Naive thymus-derived CD4-positive, alpha-beta T cell (primary cell): ENCODE measurements at regions of chr19 and their contacts with region 1.

Region 1: GRCh38 chr19:40806488-40807468 is 7.8 kb downstream of the EGLN2 start:
- DNase-seq: peak; percentile 65 to 88 (median 81)
- ATAC-seq: peak; percentile 71
- H3K4me3 ChIP-seq: peak overlapping the region; percentile 53
- H3K4me3 Mint-ChIP-seq: peak overlapping the region; percentile 81 to 100 (median 90)
- H3K27ac ChIP-seq: peak overlapping the region; percentile 87
- H3K27ac Mint-ChIP-seq: peak overlapping the region; percentile 95 to 99 (median 98)
- H3K4me1 ChIP-seq: peaks cover 66 to 80% of the 10 kb centered on the region in 2 donors
- H3K4me1 Mint-ChIP-seq: peaks cover 67 to 98% (median 85%) of the 10 kb centered on the region in 7 donors
- H3K27me3 ChIP-seq: no peaks in the 10 kb centered on the region
- H3K27me3 Mint-ChIP-seq: peaks cover 0 to 6% (median 0%) of the 10 kb centered on the region in 5 donors

Region 2: GRCh38 chr19:40724855-40725254 is 81.9 kb before region 1 on chr19:
- CTCF ChIA-PET with region 1: no interaction called
- POLR2A ChIA-PET with region 1: no interaction called
- intact Hi-C with region 1: no loop called
- DNase-seq: no peak
- ATAC-seq: no peak
- H3K4me3 ChIP-seq: no peak overlapping the region
- H3K4me3 Mint-ChIP-seq: no peak overlapping the region
- H3K27ac ChIP-seq: no peak overlapping the region
- H3K27ac Mint-ChIP-seq: no peak overlapping the region
- H3K4me1 ChIP-seq: peaks cover 0 to 8% of the 10 kb centered on the region in 2 donors
- H3K4me1 Mint-ChIP-seq: peaks cover 15 to 42% (median 29%) of the 10 kb centered on the region in 7 donors
- H3K27me3 ChIP-seq: no peaks in the 10 kb centered on the region
- H3K27me3 Mint-ChIP-seq: no peaks in the 10 kb centered on the region

Region 3: GRCh38 chr19:40822161-40822560 is 15.4 kb after region 1 on chr19:
- CTCF ChIA-PET with region 1: interaction called, 15 read pairs
- POLR2A ChIA-PET with region 1: interaction called, 28 read pairs
- intact Hi-C with region 1: loop called in 1 of 2 experiments (anchors 1 kb)
- DNase-seq: no peak
- ATAC-seq: no peak
- H3K4me3 ChIP-seq: no peak overlapping the region
- H3K4me3 Mint-ChIP-seq: no peak overlapping the region
- H3K27ac ChIP-seq: no peak overlapping the region
- H3K27ac Mint-ChIP-seq: peak overlapping the region in 3 of 9 donors; percentile 51 to 78 (median 62)
- H3K4me1 ChIP-seq: peaks cover 16 to 27% of the 10 kb centered on the region in 2 donors
- H3K4me1 Mint-ChIP-seq: peaks cover 36 to 58% (median 44%) of the 10 kb centered on the region in 7 donors
- H3K27me3 ChIP-seq: no peaks in the 10 kb centered on the region
- H3K27me3 Mint-ChIP-seq: no peaks in the 10 kb centered on the region